ENCODE measurements at regions of chr12 and their contacts with region 1.

Region 1: GRCh38 chr12:56645717-56646446 is at the start of gene ATP5F1B:
- DNase-seq: peak; percentile 91 to 97 (median 96)
- H3K4me3 ChIP-seq: peak within 1 kb of the TSS; percentile 95 to 99
- H3K4me3 Mint-ChIP-seq: peak within 1 kb of the TSS; percentile 68 to 99 (median 97)
- H3K27ac ChIP-seq: peak within 1 kb of the TSS; percentile 91
- H3K27ac Mint-ChIP-seq: peak within 1 kb of the TSS; percentile 78 to 99 (median 98)
- H3K4me1 ChIP-seq: peaks cover 33% of the 10 kb centered on the region
- H3K4me1 Mint-ChIP-seq: peaks cover 18 to 43% (median 30%) of the 10 kb centered on the region in 4 donors
- H3K27me3 ChIP-seq: no peaks in the 10 kb centered on the region
- H3K27me3 Mint-ChIP-seq: no peaks in the 10 kb centered on the region
- total RNA-seq, gene ATP5F1B: 243 to 256 TPM

Region 2: GRCh38 chr12:56670836-56671235 is 25.0 kb after region 1 on chr12:
- CTCF ChIA-PET with region 1: no interaction called
- POLR2A ChIA-PET with region 1: interaction called, 12 read pairs
- intact Hi-C with region 1: no loop called
- DNase-seq: no peak
- H3K4me3 ChIP-seq: no peak overlapping the region
- H3K4me3 Mint-ChIP-seq: no peak overlapping the region
- H3K27ac ChIP-seq: no peak overlapping the region
- H3K27ac Mint-ChIP-seq: peak overlapping the region in 1 of 7 donors; percentile 41
- H3K4me1 ChIP-seq: peaks cover 46% of the 10 kb centered on the region
- H3K4me1 Mint-ChIP-seq: peaks cover 18 to 52% (median 36%) of the 10 kb centered on the region in 4 donors
- H3K27me3 ChIP-seq: no peaks in the 10 kb centered on the region
- H3K27me3 Mint-ChIP-seq: no peaks in the 10 kb centered on the region

Region 3: DNA sequence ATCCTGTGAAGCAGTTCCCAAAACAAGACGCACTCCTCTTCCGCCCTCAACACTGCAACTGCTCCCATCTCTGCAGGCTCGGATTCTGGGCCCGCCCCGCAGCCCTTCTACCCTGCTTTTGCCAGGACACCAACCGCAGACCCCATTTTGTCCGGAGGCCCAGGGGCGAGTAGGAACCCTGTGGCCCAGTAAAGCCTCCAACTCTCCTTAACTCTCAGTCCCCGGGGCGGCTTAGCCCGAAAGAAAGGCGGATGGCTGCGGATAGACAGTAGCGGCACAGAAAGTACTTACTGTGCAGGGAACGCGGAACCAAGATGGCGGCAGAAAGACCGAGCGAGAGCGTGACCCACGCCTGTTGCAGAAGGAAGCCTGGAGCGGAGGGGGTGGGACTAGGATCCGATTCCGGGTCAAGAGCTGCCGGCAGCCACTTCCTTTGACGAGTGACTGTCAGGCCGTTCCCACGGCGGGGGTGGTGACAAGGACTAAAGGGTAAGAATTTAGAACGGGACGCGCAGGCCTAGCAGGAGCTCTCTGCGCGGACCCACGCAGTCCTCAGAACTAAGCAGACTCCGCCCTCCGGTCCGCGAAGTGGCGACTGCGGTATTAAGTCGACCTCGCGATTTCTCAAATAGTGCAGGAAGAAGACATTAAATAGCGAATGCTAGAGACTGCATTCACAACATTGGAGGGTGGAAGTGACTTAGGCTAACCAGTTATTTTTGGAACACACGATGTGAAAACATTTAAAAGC is 79.3 kb after region 1 on chr12 and contains the start of gene NACA:
- CTCF ChIA-PET with region 1: no interaction called
- POLR2A ChIA-PET with region 1: interaction called, 32 read pairs
- intact Hi-C with region 1: loop called (anchors 1 kb)
- DNase-seq: peak; percentile 94 to 100 (median 98)
- H3K4me3 ChIP-seq: peak within 1 kb of the TSS; percentile 90 to 100
- H3K4me3 Mint-ChIP-seq: peak within 1 kb of the TSS; percentile 90 to 99 (median 98)
- H3K27ac ChIP-seq: peak within 1 kb of the TSS; percentile 90
- H3K27ac Mint-ChIP-seq: peak within 1 kb of the TSS; percentile 92 to 99 (median 97)
- H3K4me1 ChIP-seq: peaks cover 54% of the 10 kb centered on the region
- H3K4me1 Mint-ChIP-seq: peaks cover 41 to 66% (median 51%) of the 10 kb centered on the region in 4 donors
- H3K27me3 ChIP-seq: no peaks in the 10 kb centered on the region
- H3K27me3 Mint-ChIP-seq: no peaks in the 10 kb centered on the region
- total RNA-seq, gene NACA: 1,184 to 1,255 TPM